CD14-positive monocyte (primary cell): ENCODE measurements at regions of chr1 and their contacts with region 1.

Region 1: DNA sequence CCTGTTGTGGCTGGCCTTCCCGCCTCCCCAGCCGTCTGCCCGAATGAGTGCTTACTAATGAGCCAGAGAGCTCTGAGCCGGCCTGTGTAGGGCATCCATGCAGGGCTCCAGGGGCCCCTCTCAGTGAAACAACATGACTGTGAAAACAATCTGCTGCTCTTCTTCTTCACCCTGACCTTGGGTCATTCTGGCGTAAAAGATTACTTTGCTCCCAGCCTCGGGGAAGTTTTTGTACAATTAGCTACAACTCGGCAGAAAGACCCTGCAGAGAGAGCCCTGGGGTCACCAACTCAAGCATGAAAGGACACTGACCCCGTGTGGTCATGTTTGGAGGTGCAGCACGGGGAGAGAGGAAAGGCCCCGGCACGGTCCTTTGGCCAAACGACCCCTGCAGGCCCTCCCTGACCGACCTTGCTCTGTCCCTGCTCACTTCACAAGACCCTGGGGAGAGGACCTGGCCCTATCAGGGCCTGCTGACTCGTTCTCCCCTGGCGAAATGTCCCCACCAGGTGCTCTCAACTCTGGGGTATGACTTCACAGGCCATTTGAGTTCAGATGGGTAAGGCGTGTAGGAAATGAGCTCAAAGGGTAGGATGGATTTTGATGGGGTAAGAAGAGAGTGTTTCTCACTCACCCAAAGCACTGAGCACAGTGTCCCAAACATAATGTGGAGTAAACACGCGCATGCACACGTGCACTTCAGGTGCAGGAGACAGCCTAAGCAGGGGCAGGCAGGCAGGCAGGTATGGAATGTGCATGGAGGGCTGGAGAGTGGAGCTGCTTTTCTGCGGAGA is 22.9 kb upstream of the FAM20B start:
- DNase-seq: peak; percentile 33 to 56 (median 54)
- H3K4me3 ChIP-seq: no peak overlapping the region
- H3K4me3 Mint-ChIP-seq: peak overlapping the region in 1 of 2 donors; percentile 44
- H3K27ac ChIP-seq: no peak overlapping the region
- H3K27ac Mint-ChIP-seq: peak overlapping the region in 2 of 7 donors; percentile 39 to 40
- H3K4me1 ChIP-seq: peaks cover 5 to 6% of the 10 kb centered on the region in 2 donors
- H3K4me1 Mint-ChIP-seq: peaks cover 7% of the 10 kb centered on the region
- H3K27me3 ChIP-seq: no peaks in the 10 kb centered on the region
- H3K27me3 Mint-ChIP-seq: peaks cover 0 to 3% (median 2%) of the 10 kb centered on the region in 3 donors
- CTCF ChIP-seq: peak; percentile 96

Region 2: GRCh38 chr1:178532392-178532791 is 470.4 kb before region 1 on chr1:
- intact Hi-C with region 1: loop called in 1 of 2 experiments (anchors 5 kb)
- DNase-seq: peak; percentile 61 to 78 (median 74)
- H3K4me3 ChIP-seq: no peak overlapping the region
- H3K4me3 Mint-ChIP-seq: peak overlapping the region in 1 of 2 donors; percentile 31
- H3K27ac ChIP-seq: no peak overlapping the region
- H3K27ac Mint-ChIP-seq: no peak overlapping the region
- H3K4me1 ChIP-seq: peaks cover 0 to 3% of the 10 kb centered on the region in 2 donors
- H3K4me1 Mint-ChIP-seq: peaks cover 8% of the 10 kb centered on the region
- H3K27me3 ChIP-seq: no peaks in the 10 kb centered on the region
- H3K27me3 Mint-ChIP-seq: peaks cover 0 to 3% (median 0%) of the 10 kb centered on the region in 3 donors
- CTCF ChIP-seq: peak; percentile 93

Region 3: DNA sequence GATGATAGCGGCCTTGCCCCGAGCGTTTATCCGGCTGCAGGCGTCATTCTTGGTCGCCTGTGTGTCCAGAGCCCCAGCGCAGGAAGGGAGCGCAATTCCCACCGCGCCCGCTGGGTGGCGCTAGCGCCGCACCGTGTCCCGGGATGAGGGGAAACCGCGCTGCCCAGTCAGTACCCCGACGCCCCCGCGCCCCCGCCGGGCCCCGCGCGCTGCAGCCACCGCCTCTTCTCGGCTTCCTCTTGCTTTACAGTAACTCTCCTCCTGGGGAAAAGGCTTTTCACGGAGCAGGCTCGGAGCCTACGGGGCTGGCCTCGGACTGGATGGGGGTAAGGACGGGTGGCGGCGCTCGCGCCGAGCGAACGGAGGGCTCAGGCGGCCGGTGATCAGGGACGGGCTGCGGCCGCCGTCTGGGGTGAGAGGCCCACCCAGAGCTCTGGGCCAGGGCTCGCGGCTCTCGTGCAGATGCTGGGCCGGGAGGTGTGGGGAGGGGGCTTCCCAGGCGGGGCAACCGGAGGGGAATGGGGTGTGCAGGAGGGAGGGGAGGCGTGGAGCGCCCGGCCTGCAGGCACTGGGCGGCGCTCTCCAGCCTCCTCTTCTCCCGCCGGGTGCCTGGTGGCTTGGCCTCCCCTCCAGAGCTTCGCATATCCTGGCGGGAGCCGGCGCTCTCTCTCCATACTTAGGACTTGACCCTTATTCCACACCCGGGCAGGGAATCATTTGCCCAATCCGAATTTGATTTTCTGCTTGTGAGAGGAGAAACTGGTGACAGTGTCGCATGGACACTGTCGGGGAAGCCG is 460.0 kb before region 1 on chr1:
- intact Hi-C with region 1: loop called in 1 of 2 experiments (anchors 2 kb)
- DNase-seq: peak; percentile 76 to 79 (median 77)
- H3K4me3 ChIP-seq: peak overlapping the region; percentile 60 to 95 (median 95)
- H3K4me3 Mint-ChIP-seq: peak overlapping the region; percentile 94 to 96
- H3K27ac ChIP-seq: peak overlapping the region; percentile 23 to 81
- H3K27ac Mint-ChIP-seq: peak overlapping the region in 6 of 7 donors; percentile 45 to 87 (median 80)
- H3K4me1 ChIP-seq: peaks cover 13 to 20% of the 10 kb centered on the region in 2 donors
- H3K4me1 Mint-ChIP-seq: peaks cover 15% of the 10 kb centered on the region
- H3K27me3 ChIP-seq: no peaks in the 10 kb centered on the region
- H3K27me3 Mint-ChIP-seq: peaks cover 3 to 6% (median 5%) of the 10 kb centered on the region in 3 donors
- CTCF ChIP-seq: peak; percentile 99

Region 4: GRCh38 chr1:178973666-178974101 is 29.1 kb before region 1 on chr1:
- intact Hi-C with region 1: no loop called
- DNase-seq: no peak
- H3K4me3 ChIP-seq: no peak overlapping the region
- H3K4me3 Mint-ChIP-seq: no peak overlapping the region
- H3K27ac ChIP-seq: no peak overlapping the region
- H3K27ac Mint-ChIP-seq: no peak overlapping the region
- H3K4me1 ChIP-seq: no peaks in the 10 kb centered on the region
- H3K4me1 Mint-ChIP-seq: peaks cover 1% of the 10 kb centered on the region
- H3K27me3 ChIP-seq: no peaks in the 10 kb centered on the region
- H3K27me3 Mint-ChIP-seq: peaks cover 0 to 4% (median 1%) of the 10 kb centered on the region in 3 donors
- CTCF ChIP-seq: no peak

Region 5: DNA sequence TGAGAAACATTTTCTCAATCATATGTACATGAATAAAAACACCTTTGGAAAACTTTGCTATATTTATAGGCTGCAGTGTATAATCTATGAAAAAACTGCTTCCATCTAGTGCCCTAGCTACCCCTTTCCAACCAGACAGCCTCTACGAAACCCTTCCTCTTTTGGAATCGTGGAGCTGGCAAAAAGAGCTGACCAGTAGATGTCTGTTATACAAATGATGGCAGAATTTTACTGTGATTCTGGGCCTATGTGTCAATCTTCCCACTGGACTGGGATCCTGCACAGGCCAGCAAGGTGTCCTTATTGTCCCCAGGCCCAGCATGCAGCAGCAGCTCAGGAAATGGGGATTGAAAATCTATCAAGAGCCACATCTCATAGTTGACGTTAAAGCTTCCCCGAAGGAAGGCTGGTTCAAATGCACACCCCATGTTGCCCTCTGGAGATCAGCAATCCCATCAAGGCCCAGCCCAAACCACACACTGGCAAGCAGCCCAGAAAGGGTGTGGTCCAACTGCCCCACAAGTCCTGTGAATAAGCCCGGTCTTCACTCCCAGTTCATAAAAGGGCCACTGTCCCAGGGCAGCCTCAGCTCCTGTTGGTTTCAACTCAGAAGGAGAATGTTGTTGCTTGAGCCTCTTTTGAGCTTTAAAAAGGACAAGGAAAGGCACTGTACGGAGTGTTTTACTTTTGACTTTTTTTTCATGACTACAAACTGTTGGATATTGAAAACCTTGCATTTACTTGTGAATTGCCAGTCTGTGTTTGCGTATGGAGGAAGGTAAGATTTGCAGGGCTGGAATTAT is 14.2 kb after region 1 on chr1:
- intact Hi-C with region 1: no loop called
- DNase-seq: peak; percentile 69 to 77 (median 71)
- H3K4me3 ChIP-seq: peak overlapping the region in 1 of 3 experiments; percentile 45
- H3K4me3 Mint-ChIP-seq: peak overlapping the region; percentile 50 to 78
- H3K27ac ChIP-seq: peak overlapping the region; percentile 51 to 71
- H3K27ac Mint-ChIP-seq: peak overlapping the region; percentile 75 to 93 (median 87)
- H3K4me1 ChIP-seq: peaks cover 24 to 32% of the 10 kb centered on the region in 2 donors
- H3K4me1 Mint-ChIP-seq: peaks cover 40% of the 10 kb centered on the region
- H3K27me3 ChIP-seq: no peaks in the 10 kb centered on the region
- H3K27me3 Mint-ChIP-seq: peaks cover 0 to 3% (median 0%) of the 10 kb centered on the region in 3 donors
- CTCF ChIP-seq: no peak

Region 6: DNA sequence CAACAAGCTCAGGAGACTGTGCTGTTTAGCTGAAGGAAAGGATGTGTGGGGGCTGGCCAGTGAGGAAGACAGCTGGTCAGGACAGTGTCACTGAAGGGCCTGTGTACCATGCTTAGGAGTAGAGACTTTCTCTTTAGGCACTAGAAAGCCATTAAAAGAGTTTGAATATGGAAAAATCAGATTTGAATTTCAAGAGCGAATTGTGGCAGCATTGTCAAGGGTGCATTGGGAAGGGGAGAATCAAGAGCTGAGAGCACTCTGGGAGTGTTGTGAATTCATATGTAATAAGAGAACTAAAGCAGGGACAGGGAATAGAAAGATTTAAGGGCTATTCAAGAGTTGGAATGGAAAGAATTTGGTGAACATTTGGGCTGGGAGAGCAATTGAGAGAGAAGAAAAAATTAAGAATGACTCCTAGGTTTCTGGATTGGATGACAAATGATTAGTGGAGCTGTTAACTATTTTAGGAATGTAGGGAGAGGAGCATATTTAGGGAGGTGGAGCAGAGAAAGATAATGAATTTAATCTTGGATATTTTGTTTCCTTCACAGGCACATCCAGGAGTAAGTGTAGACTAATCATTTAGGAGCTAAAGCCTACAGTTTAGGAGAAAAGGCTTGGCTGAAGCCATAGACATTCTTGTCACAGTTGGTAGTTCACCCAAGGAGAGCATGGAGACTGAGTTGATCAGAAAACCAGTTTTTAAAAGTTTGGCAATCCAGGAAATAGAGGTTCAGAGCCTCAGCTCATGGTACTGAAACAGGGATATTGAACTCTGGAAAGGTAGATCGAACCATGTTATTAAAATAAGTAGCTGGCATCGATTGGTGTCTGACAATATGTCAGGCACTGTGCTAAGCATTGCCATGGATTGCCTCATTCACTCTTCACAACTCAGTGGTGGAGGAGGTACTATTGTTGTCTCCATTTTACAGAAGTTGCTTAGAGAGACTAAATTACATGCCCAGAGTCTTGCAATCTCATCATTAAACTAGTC is 56.0 kb after region 1 on chr1:
- intact Hi-C with region 1: no loop called
- DNase-seq: no peak
- H3K4me3 ChIP-seq: no peak overlapping the region
- H3K4me3 Mint-ChIP-seq: no peak overlapping the region
- H3K27ac ChIP-seq: peak overlapping the region in 1 of 2 donors; percentile 17
- H3K27ac Mint-ChIP-seq: peak overlapping the region in 4 of 7 donors; percentile 0 to 81 (median 38)
- H3K4me1 ChIP-seq: no peaks in the 10 kb centered on the region
- H3K4me1 Mint-ChIP-seq: peaks cover 10% of the 10 kb centered on the region
- H3K27me3 ChIP-seq: no peaks in the 10 kb centered on the region
- H3K27me3 Mint-ChIP-seq: peaks cover 0 to 2% (median 2%) of the 10 kb centered on the region in 3 donors
- CTCF ChIP-seq: no peak